ENCODE measurements at regions of chrX and their contacts with region 1.

Region 1: GRCh38 chrX:120769576-120770341 is 105.9 kb downstream of the CT47B1 start:
- DNase-seq: no peak
- ATAC-seq: peak; percentile 51; the same call in 2 of the 3 replicates
- H3K4me3 ChIP-seq: no peak overlapping the region
- H3K27ac ChIP-seq: no peak overlapping the region
- H3K4me1 ChIP-seq: no peaks in the 10 kb centered on the region
- H3K27me3 ChIP-seq: no peaks in the 10 kb centered on the region
- CTCF ChIP-seq: peak; percentile 33 to 47 (median 46); a peak in 4 of 6 replicates
- EP300 ChIP-seq: no peak
- POLR2A ChIP-seq: no peak
- RAD21 ChIP-seq: peak; percentile 74

Region 2: DNA sequence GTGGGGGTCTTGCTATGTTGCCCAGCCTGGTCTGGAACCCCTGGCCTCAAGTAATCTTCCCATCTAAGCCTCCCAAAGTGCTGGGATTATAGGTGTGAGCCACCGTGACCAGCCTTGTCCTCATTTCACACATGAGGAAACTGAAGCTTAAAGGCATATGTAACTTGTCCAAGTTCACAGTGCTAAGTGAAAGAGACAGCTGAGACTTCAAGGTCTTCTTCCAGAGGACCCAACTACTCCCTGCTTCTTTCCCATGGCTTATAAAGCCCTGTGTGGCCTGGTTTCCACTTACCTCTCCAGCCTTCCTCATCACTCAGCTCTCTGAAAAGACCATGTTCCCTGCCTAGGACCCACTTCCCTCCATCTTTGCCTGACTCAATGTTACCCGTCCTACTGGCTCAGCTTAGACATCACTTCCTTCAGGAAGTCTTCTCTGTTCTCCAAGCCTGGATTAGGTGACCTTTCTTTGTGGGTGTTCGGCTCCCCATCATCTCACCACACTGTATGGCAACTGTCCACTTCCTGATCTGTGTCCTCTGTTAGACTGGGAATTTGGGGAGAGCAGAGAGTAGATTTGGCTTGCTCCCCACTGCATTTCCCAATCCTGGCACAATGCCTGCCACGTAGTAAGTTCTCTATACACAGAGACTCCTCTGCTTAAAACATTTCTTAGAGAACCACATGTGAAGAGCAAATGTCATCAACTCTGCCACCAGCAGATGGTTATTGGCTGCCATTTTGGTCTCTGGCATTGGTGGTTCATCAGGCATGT is 270.3 kb before region 1 on chrX:
- CTCF ChIA-PET with region 1: interaction called, 11 read pairs
- POLR2A ChIA-PET with region 1: no interaction called
- RAD21 ChIA-PET with region 1: interaction called, 3 read pairs
- SMC1A ChIA-PET with region 1: interaction called, 9 read pairs
- in situ Hi-C with region 1: loop called (anchors 25 kb)
- intact Hi-C with region 1: loop called (anchors 1 kb)
- DNase-seq: no peak
- ATAC-seq: no peak
- H3K4me3 ChIP-seq: no peak overlapping the region
- H3K27ac ChIP-seq: no peak overlapping the region
- H3K4me1 ChIP-seq: no peaks in the 10 kb centered on the region
- H3K27me3 ChIP-seq: no peaks in the 10 kb centered on the region
- CTCF ChIP-seq: no peak
- EP300 ChIP-seq: no peak
- POLR2A ChIP-seq: no peak
- RAD21 ChIP-seq: no peak

Measured in GM12878 (cell line).